ENCODE measurements at regions of chr11 and their contacts with region 1.

Region 1: GRCh38 chr11:58685973-58686722 is 45.6 kb downstream of the GLYAT start:
- DNase-seq: peak in 2 of 9 experiments; percentile 20
- ATAC-seq: peak; percentile 68
- H3K4me3 ChIP-seq: peak overlapping the region; percentile 12 to 16
- H3K4me3 Mint-ChIP-seq: peak overlapping the region; percentile 46
- H3K27ac ChIP-seq: no peak overlapping the region
- H3K27ac Mint-ChIP-seq: peak overlapping the region; percentile 76
- H3K4me1 ChIP-seq: peaks cover 10% of the 10 kb centered on the region
- H3K4me1 Mint-ChIP-seq: peaks cover 18% of the 10 kb centered on the region
- H3K27me3 ChIP-seq: no peaks in the 10 kb centered on the region
- H3K27me3 Mint-ChIP-seq: peaks cover under 1% of the 10 kb centered on the region
- CTCF ChIP-seq: no peak

Region 2: GRCh38 chr11:58675334-58676155 is 10.6 kb before region 1 on chr11:
- CTCF ChIA-PET with region 1: interaction called, 12 read pairs
- POLR2A ChIA-PET with region 1: interaction called, 6 read pairs
- intact Hi-C with region 1: no loop called
- DNase-seq: peak; percentile 46 to 86 (median 72)
- ATAC-seq: peak; percentile 80
- H3K4me3 ChIP-seq: no peak overlapping the region
- H3K4me3 Mint-ChIP-seq: no peak overlapping the region
- H3K27ac ChIP-seq: no peak overlapping the region
- H3K27ac Mint-ChIP-seq: no peak overlapping the region
- H3K4me1 ChIP-seq: no peaks in the 10 kb centered on the region
- H3K4me1 Mint-ChIP-seq: no peaks in the 10 kb centered on the region
- H3K27me3 ChIP-seq: no peaks in the 10 kb centered on the region
- H3K27me3 Mint-ChIP-seq: no peaks in the 10 kb centered on the region
- CTCF ChIP-seq: peak; percentile 93

Region 3: DNA sequence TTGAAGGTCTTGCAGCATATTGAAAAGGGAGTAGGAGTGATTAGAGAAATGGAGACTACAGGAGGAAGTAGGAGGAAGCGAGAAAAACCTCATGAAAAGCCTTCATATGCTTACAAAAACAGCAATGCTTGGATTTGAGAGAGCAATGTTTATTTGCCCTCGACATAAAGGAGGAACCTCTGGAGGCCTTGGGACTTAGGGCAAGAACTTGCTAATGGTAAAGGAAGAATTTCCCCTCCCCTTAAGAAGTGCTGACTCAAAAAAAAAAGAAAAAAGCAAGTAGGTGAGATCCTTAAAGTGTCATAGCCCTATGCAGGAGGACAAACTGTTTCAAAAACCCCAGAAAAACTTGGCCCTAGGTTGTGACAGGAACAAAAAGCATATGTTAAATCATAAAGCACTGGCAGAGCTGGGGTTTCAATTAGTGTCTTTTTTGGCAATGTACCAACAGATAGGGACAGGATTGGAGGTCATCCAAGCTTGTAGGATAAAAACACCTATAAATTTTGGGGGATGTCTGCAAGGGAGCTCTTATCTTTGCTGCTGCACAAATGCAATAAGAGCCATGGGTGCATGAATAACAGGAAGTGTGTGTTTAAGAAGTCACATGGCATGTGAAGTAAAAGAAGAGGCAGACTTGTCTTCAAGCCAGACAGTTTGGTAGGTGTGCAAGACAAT is 40.7 kb after region 1 on chr11:
- CTCF ChIA-PET with region 1: no interaction called
- POLR2A ChIA-PET with region 1: interaction called, 3 read pairs
- intact Hi-C with region 1: loop called in 1 of 2 experiments (anchors 2 kb)
- DNase-seq: peak in 4 of 9 experiments; percentile 18 to 61 (median 39)
- ATAC-seq: peak; percentile 83
- H3K4me3 ChIP-seq: peak overlapping the region in 1 of 2 experiments; percentile 21
- H3K4me3 Mint-ChIP-seq: peak overlapping the region; percentile 8
- H3K27ac ChIP-seq: peak overlapping the region; percentile 48 to 51
- H3K27ac Mint-ChIP-seq: peak overlapping the region; percentile 91
- H3K4me1 ChIP-seq: peaks cover 40% of the 10 kb centered on the region
- H3K4me1 Mint-ChIP-seq: peaks cover 47% of the 10 kb centered on the region
- H3K27me3 ChIP-seq: no peaks in the 10 kb centered on the region
- H3K27me3 Mint-ChIP-seq: no peaks in the 10 kb centered on the region
- CTCF ChIP-seq: no peak